Endothelial cell of umbilical vein (primary cell): ENCODE measurements at regions of chrX and their contacts with region 1.

Region 1: DNA sequence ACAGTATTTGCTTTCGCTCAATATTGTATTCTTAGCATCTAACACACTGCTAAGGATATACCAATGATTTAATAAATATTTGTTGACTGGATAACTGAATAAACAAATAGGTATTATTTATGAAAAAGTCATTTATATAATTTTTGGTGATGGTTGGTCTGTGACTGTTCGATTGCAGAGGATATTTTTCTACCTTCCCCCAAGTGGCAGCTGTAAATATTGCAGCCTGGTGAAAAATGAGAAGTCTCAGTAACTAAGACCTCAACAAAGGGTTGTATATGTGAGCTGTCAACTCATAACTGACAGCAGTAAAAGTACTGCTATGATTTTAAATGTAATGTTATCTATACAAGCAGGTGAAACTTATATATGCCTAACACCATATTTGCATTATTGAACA is 36.0 kb downstream of the HTR2C start:
- DNase-seq: peak; percentile 1
- H3K4me3 ChIP-seq: no peak overlapping the region
- H3K27ac ChIP-seq: no peak overlapping the region
- H3K4me1 ChIP-seq: no peaks in the 10 kb centered on the region
- H3K27me3 ChIP-seq: no peaks in the 10 kb centered on the region
- CTCF ChIP-seq: peak in 1 of 2 donors; percentile 29
- POLR2A ChIP-seq: no peak

Region 2: DNA sequence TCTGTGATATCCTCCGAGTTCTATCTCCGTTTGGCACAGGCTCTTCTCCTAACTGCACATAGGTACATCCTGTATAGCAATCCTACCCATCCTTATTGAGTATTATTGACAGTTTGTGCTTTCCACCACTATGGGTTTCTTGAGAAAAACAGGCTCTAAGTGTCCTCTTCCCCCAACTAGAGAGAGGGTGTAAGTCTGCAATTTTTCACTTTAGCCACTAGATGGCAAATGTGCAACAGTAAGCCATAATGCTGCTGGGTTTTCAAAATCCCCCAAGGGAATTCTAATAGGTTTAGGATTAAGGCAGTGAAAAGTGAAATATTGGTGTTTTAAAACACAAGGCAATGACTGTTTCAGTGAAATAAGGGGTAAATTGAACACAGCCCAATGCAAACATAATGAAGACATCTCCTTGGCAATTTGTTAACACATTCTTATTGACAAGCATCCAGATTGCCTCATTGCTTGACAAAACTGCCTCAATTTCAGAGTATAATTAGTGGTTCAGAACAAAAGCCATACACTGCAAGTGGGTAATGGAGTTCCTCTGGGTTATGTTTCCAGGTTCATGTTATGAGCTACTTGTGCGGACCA is 275.0 kb before region 1 on chrX:
- CTCF ChIA-PET with region 1: no interaction called
- POLR2A ChIA-PET with region 1: no interaction called
- dilution Hi-C with region 1: no loop called
- intact Hi-C with region 1: no loop called
- DNase-seq: peak; percentile 14
- H3K4me3 ChIP-seq: no peak overlapping the region
- H3K27ac ChIP-seq: no peak overlapping the region
- H3K4me1 ChIP-seq: no peaks in the 10 kb centered on the region
- H3K27me3 ChIP-seq: no peaks in the 10 kb centered on the region
- CTCF ChIP-seq: peak in 1 of 2 donors; percentile 31
- POLR2A ChIP-seq: no peak

Region 3: DNA sequence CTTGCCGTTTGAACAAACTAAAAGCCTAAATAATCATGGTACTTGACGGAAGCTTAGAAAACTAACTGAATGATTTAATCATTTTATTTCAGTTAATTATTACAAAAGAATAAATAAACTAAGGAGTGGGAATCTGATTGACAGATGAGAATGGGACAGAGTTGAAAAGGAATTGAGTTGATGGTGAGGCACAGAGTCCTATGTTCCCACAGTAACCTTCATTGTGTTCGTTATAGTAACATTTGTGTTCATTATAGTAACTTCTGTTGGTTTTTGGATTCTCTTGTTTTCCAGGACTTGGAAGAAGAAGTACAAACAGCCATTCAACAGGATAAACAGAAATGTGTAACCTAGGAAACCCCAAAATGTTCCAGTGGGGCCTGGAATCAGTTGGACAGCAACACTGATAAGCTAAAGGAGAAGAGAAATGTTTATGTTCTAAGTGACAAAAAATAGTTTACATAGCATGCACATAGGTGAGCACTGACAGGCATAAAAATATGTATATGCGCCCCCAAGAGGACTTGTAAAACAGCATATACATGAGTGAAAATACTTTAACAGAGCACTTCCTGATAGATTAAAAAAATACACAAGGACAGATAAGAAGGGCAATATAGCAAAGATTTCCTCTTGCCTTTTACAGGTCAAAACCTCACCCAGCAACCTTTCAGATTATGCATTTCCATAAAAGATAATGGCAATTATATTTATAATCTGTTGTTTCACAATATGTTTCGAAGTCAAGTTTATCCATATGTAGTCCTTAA is 254.6 kb before region 1 on chrX:
- CTCF ChIA-PET with region 1: no interaction called
- POLR2A ChIA-PET with region 1: no interaction called
- dilution Hi-C with region 1: no loop called
- intact Hi-C with region 1: no loop called
- DNase-seq: no peak
- H3K4me3 ChIP-seq: no peak overlapping the region
- H3K27ac ChIP-seq: no peak overlapping the region
- H3K4me1 ChIP-seq: no peaks in the 10 kb centered on the region
- H3K27me3 ChIP-seq: no peaks in the 10 kb centered on the region
- CTCF ChIP-seq: no peak
- POLR2A ChIP-seq: no peak

Region 4: DNA sequence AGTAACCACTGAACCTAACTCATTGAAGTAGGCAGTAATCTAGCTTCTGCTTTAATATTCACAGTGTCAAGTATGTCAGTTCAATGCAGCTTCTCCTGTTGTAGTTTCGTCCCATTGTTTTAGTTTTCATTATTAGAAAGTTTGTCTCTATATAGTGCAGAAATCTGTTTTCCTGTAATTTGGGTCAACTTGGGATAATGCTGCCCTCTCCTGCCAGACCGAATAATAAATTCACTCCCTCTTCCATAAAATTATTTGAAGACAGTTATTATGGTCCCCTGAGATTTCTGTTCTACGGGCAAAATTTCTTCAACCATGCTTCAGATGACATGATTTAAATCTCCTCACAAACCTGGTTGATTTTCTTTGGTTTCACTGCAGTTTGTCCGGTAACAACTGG is 665.0 kb after region 1 on chrX:
- CTCF ChIA-PET with region 1: no interaction called
- POLR2A ChIA-PET with region 1: no interaction called
- dilution Hi-C with region 1: no loop called
- intact Hi-C with region 1: loop called (anchors 10 kb)
- DNase-seq: peak; percentile 5
- H3K4me3 ChIP-seq: no peak overlapping the region
- H3K27ac ChIP-seq: no peak overlapping the region
- H3K4me1 ChIP-seq: no peaks in the 10 kb centered on the region
- H3K27me3 ChIP-seq: no peaks in the 10 kb centered on the region
- CTCF ChIP-seq: no peak
- POLR2A ChIP-seq: no peak